ENCODE measurements at regions of chr14 and their contacts with region 1.

Region 1: GRCh38 chr14:85528080-85528896 is 1.7 kb upstream of the FLRT2 start:
- DNase-seq: peak; percentile 90
- H3K4me3 ChIP-seq: peak overlapping the region; percentile 77
- H3K27ac ChIP-seq: peak overlapping the region; percentile 90
- H3K4me1 ChIP-seq: peaks cover 19% of the 10 kb centered on the region
- H3K27me3 ChIP-seq: no peaks in the 10 kb centered on the region
- CTCF ChIP-seq: peak; percentile 81

Region 2: GRCh38 chr14:84025106-84026012 is 1502.9 kb before region 1 on chr14:
- CTCF ChIA-PET with region 1: no interaction called
- POLR2A ChIA-PET with region 1: no interaction called
- intact Hi-C with region 1: loop called (anchors 5 kb)
- DNase-seq: peak; percentile 55
- H3K4me3 ChIP-seq: no peak overlapping the region
- H3K27ac ChIP-seq: peak overlapping the region; percentile 83
- H3K4me1 ChIP-seq: peaks cover 63% of the 10 kb centered on the region
- H3K27me3 ChIP-seq: no peaks in the 10 kb centered on the region
- CTCF ChIP-seq: no peak

Region 3: GRCh38 chr14:84814391-84814790 is 713.9 kb before region 1 on chr14:
- CTCF ChIA-PET with region 1: no interaction called
- POLR2A ChIA-PET with region 1: no interaction called
- intact Hi-C with region 1: loop called (anchors 2 kb)
- DNase-seq: peak; percentile 85
- H3K4me3 ChIP-seq: no peak overlapping the region
- H3K27ac ChIP-seq: peak overlapping the region; percentile 92
- H3K4me1 ChIP-seq: peaks cover 7% of the 10 kb centered on the region
- H3K27me3 ChIP-seq: no peaks in the 10 kb centered on the region
- CTCF ChIP-seq: no peak

Region 4: DNA sequence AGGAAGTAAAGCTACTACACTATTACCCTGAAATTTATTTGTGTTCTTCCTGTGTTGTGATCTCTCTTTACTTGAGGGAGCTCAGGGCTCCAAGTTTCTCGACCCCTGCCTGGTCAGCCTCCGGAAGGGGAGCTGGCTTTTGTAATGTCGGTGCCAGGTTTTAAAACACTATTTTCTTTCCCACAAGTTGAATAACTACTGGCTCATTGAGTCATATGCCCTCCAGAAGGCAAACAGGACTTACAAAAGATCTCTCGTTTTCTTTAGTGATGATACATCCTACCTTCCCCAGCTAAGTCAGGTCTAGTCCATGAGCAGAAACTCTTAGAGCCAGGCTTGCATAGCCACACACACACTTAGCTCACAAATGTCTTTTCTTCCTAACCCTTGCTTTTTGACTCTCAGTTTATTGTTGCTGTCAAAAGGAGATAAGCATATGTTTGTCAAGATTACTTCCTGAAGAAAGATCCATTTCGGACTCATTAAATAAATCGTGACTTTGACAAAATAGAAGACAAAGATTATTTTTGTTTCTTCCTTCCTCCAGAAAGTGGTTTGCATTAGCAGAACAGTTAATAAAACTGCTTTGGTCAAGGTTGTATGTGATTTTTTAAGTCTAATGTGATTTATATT is 208.2 kb before region 1 on chr14:
- CTCF ChIA-PET with region 1: no interaction called
- POLR2A ChIA-PET with region 1: interaction called, 3 read pairs
- intact Hi-C with region 1: loop called (anchors 2 kb)
- DNase-seq: peak; percentile 72
- H3K4me3 ChIP-seq: no peak overlapping the region
- H3K27ac ChIP-seq: no peak overlapping the region
- H3K4me1 ChIP-seq: peaks cover 19% of the 10 kb centered on the region
- H3K27me3 ChIP-seq: no peaks in the 10 kb centered on the region
- CTCF ChIP-seq: no peak

Region 5: GRCh38 chr14:85387181-85387580 is 141.1 kb before region 1 on chr14:
- CTCF ChIA-PET with region 1: no interaction called
- POLR2A ChIA-PET with region 1: no interaction called
- intact Hi-C with region 1: no loop called
- DNase-seq: no peak
- H3K4me3 ChIP-seq: no peak overlapping the region
- H3K27ac ChIP-seq: no peak overlapping the region
- H3K4me1 ChIP-seq: no peaks in the 10 kb centered on the region
- H3K27me3 ChIP-seq: no peaks in the 10 kb centered on the region
- CTCF ChIP-seq: no peak

Region 6: DNA sequence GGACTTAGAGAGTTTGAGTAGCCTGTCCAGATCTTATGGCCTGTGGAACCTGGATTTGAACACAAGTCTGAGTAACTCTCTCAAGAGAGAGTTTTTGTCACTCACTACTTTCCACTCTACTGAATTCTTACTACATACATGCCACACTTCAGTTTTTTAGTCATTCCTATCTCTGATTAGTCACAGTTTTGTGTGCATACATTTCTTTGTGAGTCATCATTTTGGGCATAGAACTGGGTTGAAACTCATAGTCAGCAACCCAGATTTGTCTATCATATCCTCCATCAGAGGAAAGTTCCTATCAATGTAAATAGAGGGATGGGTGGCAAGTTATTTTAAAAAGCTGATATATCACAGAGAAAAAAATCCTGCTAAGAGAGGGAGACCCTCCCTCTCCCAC is 44.6 kb after region 1 on chr14:
- CTCF ChIA-PET with region 1: no interaction called
- POLR2A ChIA-PET with region 1: no interaction called
- intact Hi-C with region 1: no loop called
- DNase-seq: peak; percentile 56
- H3K4me3 ChIP-seq: no peak overlapping the region
- H3K27ac ChIP-seq: peak overlapping the region; percentile 12
- H3K4me1 ChIP-seq: peaks cover 38% of the 10 kb centered on the region
- H3K27me3 ChIP-seq: no peaks in the 10 kb centered on the region
- CTCF ChIP-seq: no peak

Region 7: GRCh38 chr14:85596562-85596961 is 68.3 kb after region 1 on chr14:
- CTCF ChIA-PET with region 1: no interaction called
- POLR2A ChIA-PET with region 1: no interaction called
- intact Hi-C with region 1: no loop called
- DNase-seq: no peak
- H3K4me3 ChIP-seq: no peak overlapping the region
- H3K27ac ChIP-seq: no peak overlapping the region
- H3K4me1 ChIP-seq: peaks cover 35% of the 10 kb centered on the region
- H3K27me3 ChIP-seq: no peaks in the 10 kb centered on the region
- CTCF ChIP-seq: no peak

Region 8: DNA sequence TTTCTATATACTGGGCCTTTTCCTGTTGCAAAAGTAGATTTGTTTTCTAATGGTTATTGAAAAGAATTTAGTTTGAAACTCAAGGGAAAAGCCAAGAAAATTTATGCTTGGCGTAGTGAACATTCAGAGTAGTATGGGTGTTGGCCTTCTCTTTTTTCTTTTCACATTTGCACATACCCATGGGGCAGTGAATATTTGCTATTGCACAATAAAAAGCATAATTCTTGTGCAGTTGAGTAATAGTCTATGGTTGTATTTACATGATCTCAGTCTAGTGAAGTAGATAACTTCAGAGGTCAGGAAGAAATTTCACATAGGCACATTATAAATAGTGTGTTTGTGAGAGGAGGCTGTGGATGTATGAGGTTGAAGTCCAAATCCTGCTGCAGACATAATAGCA is 159.7 kb after region 1 on chr14:
- CTCF ChIA-PET with region 1: no interaction called
- POLR2A ChIA-PET with region 1: no interaction called
- intact Hi-C with region 1: no loop called
- DNase-seq: no peak
- H3K4me3 ChIP-seq: no peak overlapping the region
- H3K27ac ChIP-seq: no peak overlapping the region
- H3K4me1 ChIP-seq: no peaks in the 10 kb centered on the region
- H3K27me3 ChIP-seq: no peaks in the 10 kb centered on the region
- CTCF ChIP-seq: no peak

Region 9: DNA sequence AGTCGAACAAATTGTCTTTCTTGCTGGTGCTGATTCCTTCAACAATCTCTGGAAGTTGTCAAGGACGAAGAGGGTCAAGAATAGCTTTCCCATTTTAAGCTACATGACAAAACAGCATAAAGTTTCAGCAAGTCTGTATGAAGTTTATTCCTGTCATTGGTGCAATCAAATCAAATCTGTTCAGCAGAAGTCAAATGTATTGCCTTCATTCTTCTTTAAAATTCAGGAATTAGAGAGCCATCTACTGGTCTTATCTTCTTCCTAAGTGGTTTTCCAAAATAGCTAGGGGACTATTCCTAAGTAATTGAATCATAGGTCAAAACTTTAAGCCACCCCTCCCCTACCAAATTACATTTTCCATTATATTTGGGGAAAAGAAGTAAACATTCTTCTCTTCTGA is 1474.5 kb after region 1 on chr14:
- CTCF ChIA-PET with region 1: no interaction called
- POLR2A ChIA-PET with region 1: no interaction called
- intact Hi-C with region 1: loop called (anchors 10 kb)
- DNase-seq: peak; percentile 50
- H3K4me3 ChIP-seq: no peak overlapping the region
- H3K27ac ChIP-seq: no peak overlapping the region
- H3K4me1 ChIP-seq: peaks cover 43% of the 10 kb centered on the region
- H3K27me3 ChIP-seq: no peaks in the 10 kb centered on the region
- CTCF ChIP-seq: peak; percentile 54